Activated CD4-positive, alpha-beta T cell treated with anti-CD3 and anti-CD28 coated beads for 36 hours (primary cell): ENCODE measurements at regions of chr10 and their contacts with region 1.

Region 1: GRCh38 chr10:112140110-112140970 is 43.2 kb downstream of the GPAM start:
- DNase-seq: peak; percentile 88
- ATAC-seq: peak; percentile 99
- H3K4me3 Mint-ChIP-seq: no peak overlapping the region
- H3K27ac Mint-ChIP-seq: no peak overlapping the region
- H3K4me1 Mint-ChIP-seq: no peaks in the 10 kb centered on the region
- H3K27me3 Mint-ChIP-seq: no peaks in the 10 kb centered on the region

Region 2: DNA sequence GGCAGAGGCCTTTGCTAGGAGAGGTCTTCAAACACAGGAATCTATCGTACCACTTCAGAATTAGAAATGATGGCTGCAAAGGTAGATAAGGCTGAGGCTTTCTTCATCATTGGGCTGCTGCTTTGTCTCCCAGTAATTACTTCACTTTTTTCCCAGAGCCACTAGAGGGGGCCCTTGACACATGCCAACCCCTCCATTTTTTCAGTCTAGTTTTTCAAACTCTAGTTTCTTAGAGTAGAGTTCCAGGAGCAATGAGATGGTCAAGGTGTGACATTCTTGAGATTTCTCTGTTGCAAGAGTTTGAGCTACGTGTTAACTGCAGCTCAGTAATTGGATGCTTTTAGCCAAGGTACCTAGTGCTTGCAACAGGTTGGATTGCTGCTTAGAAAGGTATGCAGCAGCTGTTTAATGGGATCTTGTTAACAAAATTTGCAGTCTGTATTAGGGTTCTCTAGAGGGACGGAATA is 1530.0 kb before region 1 on chr10:
- CTCF ChIA-PET with region 1: no interaction called
- POLR2A ChIA-PET with region 1: no interaction called
- intact Hi-C with region 1: loop called in 1 of 2 experiments (anchors 10 kb)
- DNase-seq: peak; percentile 72
- ATAC-seq: peak; percentile 16
- H3K4me3 Mint-ChIP-seq: no peak overlapping the region
- H3K27ac Mint-ChIP-seq: no peak overlapping the region
- H3K4me1 Mint-ChIP-seq: peaks cover 38% of the 10 kb centered on the region
- H3K27me3 Mint-ChIP-seq: no peaks in the 10 kb centered on the region

Region 3: GRCh38 chr10:111756217-111757061 is 383.9 kb before region 1 on chr10:
- CTCF ChIA-PET with region 1: interaction called, 7 read pairs
- POLR2A ChIA-PET with region 1: no interaction called
- intact Hi-C with region 1: loop called (anchors 1 to 10 kb)
- DNase-seq: peak; percentile 49
- ATAC-seq: no peak
- H3K4me3 Mint-ChIP-seq: no peak overlapping the region
- H3K27ac Mint-ChIP-seq: no peak overlapping the region
- H3K4me1 Mint-ChIP-seq: no peaks in the 10 kb centered on the region
- H3K27me3 Mint-ChIP-seq: peaks cover 18% of the 10 kb centered on the region

Region 4: DNA sequence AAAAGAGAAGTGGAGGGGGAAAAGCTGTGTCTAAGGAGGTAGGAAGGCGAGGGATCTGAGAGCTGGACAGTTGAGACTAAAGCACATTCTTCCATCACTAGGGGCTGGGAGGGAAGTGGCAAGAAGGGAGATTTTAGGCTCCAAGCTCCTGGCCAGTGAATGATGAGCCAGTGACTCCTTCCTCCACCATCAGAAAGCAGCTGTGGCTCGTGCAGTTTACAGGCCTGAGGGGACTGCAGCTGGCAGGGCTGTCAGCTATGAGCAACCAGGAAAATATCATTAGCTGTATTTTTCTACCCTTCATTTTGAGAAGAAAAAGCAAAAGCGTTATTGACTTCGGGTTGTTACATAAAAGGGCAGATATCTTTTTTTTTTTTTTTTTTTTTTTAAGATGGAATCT is 17.5 kb before region 1 on chr10:
- CTCF ChIA-PET with region 1: interaction called, 11 read pairs
- POLR2A ChIA-PET with region 1: no interaction called
- intact Hi-C with region 1: no loop called
- DNase-seq: no peak
- ATAC-seq: no peak
- H3K4me3 Mint-ChIP-seq: no peak overlapping the region
- H3K27ac Mint-ChIP-seq: no peak overlapping the region
- H3K4me1 Mint-ChIP-seq: no peaks in the 10 kb centered on the region
- H3K27me3 Mint-ChIP-seq: no peaks in the 10 kb centered on the region

Region 5: GRCh38 chr10:112177247-112177646 is 36.9 kb after region 1 on chr10:
- CTCF ChIA-PET with region 1: interaction called, 15 read pairs
- POLR2A ChIA-PET with region 1: no interaction called
- intact Hi-C with region 1: no loop called
- DNase-seq: no peak
- ATAC-seq: no peak
- H3K4me3 Mint-ChIP-seq: no peak overlapping the region
- H3K27ac Mint-ChIP-seq: no peak overlapping the region
- H3K4me1 Mint-ChIP-seq: peaks cover 2% of the 10 kb centered on the region
- H3K27me3 Mint-ChIP-seq: no peaks in the 10 kb centered on the region

Region 6: DNA sequence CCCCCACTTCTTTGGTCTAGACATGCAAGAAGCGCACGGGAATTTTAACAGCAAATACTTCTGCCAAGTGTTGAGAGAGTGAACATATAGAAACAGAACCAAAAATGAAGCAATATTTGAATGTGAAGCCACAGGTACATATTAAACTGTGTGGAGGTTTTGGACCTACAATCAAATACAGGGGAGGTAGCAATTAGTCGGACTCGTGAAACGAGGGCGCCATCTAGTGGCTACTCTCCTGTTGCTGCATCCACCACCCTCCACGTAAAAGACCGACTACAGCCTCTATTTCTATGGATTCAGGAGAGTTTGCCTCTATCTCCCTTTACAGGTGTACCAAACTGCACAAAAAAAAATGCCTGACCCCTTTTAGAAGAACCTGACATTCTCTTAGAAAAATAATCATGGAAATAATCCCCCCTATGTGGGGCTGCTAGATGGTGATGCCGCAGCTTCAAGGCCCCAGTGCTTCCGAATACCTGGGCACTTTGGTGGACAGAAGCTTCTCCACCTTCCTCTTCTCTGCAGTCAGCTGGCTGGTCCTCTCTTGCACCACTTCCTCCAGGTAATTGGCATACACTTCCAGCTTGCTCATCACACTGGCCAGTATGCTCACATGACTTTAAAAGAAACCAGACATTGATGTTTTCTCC is 174.6 kb after region 1 on chr10:
- CTCF ChIA-PET with region 1: interaction called, 3 read pairs
- POLR2A ChIA-PET with region 1: no interaction called
- intact Hi-C with region 1: loop called (anchors 1 to 5 kb)
- DNase-seq: peak; percentile 90
- ATAC-seq: peak; percentile 83
- H3K4me3 Mint-ChIP-seq: no peak overlapping the region
- H3K27ac Mint-ChIP-seq: no peak overlapping the region
- H3K4me1 Mint-ChIP-seq: no peaks in the 10 kb centered on the region
- H3K27me3 Mint-ChIP-seq: peaks cover 22% of the 10 kb centered on the region